Right ventricle myocardium inferior (tissue), 1 donor: ENCODE measurements at regions of chr18 and their contacts with region 1.

Region 1: DNA sequence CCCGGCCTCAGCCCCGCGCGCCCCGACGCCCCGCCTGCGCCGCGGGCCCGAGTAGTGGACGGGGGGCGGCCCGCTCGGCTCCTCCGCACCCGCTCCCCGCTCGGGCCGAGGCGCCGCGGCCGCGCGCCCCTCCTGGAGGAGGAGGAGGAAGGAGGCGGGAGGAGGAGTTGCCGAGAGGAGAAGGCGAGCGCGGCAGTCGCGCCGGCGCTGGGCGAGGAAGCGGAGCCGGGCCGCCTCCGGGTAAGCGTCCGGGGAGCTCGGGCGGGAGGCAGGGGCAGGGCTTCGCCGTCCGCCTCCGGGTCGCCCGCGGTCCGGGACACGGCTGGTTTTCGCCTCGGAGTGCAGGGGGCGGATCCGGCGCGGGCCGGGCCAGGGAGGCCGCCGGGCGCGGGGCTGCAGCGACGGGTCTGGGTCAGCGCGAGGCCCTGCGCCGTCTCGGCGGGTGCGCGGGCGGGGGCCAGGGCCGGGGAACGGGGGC is at the start of gene SOCS6:
- DNase-seq: peak; percentile 82
- ATAC-seq: peak; percentile 70
- total RNA-seq, gene SOCS6: 21.8 TPM

Region 2: GRCh38 chr18:70205421-70206397 is 83.2 kb before region 1 on chr18 and contains the start of gene RTTN:
- intact Hi-C with region 1: loop called (anchors 2 kb)
- DNase-seq: peak; percentile 97
- ATAC-seq: peak; percentile 100
- total RNA-seq, gene RTTN: 9.4 TPM

Region 3: DNA sequence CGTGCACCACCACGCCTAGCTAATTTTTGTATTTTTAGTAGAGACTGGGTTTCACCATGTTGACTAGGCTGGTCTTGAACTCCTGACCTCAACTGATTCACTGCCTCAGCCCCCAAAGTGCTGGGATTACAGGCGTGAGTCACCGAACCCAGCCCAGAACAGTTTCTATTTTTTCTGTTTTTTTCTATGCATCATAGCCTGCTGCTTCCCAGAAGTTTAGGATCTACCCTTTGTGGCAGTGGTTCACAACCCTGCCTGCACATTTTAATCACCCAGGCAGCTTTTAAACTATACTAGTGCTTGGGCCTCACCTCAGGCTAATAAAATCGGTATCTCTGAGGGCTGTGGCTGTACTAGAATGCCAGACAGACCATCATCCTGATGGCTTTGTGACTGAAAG is 39.8 kb before region 1 on chr18:
- intact Hi-C with region 1: loop called (anchors 5 kb)
- DNase-seq: no peak
- ATAC-seq: no peak